Transverse colon (tissue), 4 donors: ENCODE measurements at regions of chr4 and their contacts with region 1.

Region 1: DNA sequence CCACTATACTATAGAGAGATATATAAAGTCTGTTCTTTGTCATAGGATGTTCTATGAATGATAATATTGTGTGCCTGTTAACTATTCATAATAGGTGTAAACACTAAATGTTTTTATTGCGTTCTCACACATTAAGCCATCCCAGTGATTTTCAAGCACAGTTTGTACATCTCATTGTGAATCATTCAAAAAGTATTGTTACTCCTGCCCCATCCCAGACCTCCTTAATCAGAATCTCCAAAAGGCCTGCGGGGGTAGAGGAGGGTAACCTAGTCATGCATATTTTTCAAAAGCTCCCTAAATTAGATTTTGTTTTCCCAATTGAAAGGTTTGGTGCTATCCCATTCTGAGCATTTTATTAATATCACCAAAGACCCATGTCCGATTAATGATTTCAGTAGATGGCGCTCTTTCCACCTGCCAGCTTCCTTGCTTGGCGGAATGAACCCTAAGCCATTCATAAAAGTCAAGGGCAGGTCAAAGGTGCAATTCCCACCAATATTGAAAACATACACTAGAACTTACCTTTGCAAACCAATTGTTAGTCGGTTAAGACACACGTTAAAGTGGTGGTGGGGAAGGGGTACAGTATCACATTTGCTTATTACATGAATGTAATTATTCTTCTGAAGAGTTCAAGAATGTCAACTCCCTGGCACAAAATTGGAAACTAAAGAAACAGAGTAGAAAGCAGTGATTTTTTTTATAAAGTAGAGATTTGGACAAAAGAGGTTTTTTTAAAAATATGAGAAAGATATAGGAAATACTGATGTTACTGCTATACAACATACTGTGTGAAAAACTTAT is 5.8 kb upstream of the TET2 start:
- DNase-seq: peak; percentile 18
- H3K4me3 ChIP-seq: no peak overlapping the region
- H3K27ac ChIP-seq: no peak overlapping the region
- H3K4me1 ChIP-seq: peaks cover 0 to 9% (median 4%) of the 10 kb centered on the region in 4 donors
- H3K27me3 ChIP-seq: no peaks in the 10 kb centered on the region
- CTCF ChIP-seq: peak; percentile 56 to 60 (median 57)
- EP300 ChIP-seq: no peak
- POLR2A ChIP-seq: no peak

Region 2: GRCh38 chr4:105022811-105023667 is 117.8 kb before region 1 on chr4:
- in situ Hi-C with region 1: no loop called
- intact Hi-C with region 1: no loop called
- DNase-seq: no peak
- H3K4me3 ChIP-seq: no peak overlapping the region
- H3K27ac ChIP-seq: no peak overlapping the region
- H3K4me1 ChIP-seq: no peaks in the 10 kb centered on the region
- H3K27me3 ChIP-seq: no peaks in the 10 kb centered on the region
- CTCF ChIP-seq: no peak
- EP300 ChIP-seq: no peak
- POLR2A ChIP-seq: no peak

Region 3: GRCh38 chr4:105471566-105472176 is 330.8 kb after region 1 on chr4:
- in situ Hi-C with region 1: loop called (anchors 5 to 10 kb)
- intact Hi-C with region 1: loop called (anchors 1 kb)
- DNase-seq: peak; percentile 78
- H3K4me3 ChIP-seq: peak overlapping the region in 2 of 4 donors; percentile 83 to 85
- H3K27ac ChIP-seq: peak overlapping the region; percentile 98 to 100 (median 98)
- H3K4me1 ChIP-seq: peaks cover 11 to 41% (median 22%) of the 10 kb centered on the region in 4 donors
- H3K27me3 ChIP-seq: no peaks in the 10 kb centered on the region
- CTCF ChIP-seq: peak; percentile 68 to 81 (median 69)
- EP300 ChIP-seq: no peak
- POLR2A ChIP-seq: no peak